ENCODE measurements at regions of chr6 and their contacts with region 1.

Region 1: GRCh38 chr6:133697666-133698065 is 191.2 kb upstream of the TCF21 start:
- DNase-seq: no peak
- H3K4me3 ChIP-seq: no peak overlapping the region
- H3K27ac ChIP-seq: no peak overlapping the region
- H3K4me1 ChIP-seq: no peaks in the 10 kb centered on the region
- H3K27me3 ChIP-seq: no peaks in the 10 kb centered on the region
- CTCF ChIP-seq: no peak
- POLR2A ChIP-seq: no peak

Region 2: GRCh38 chr6:133539502-133540259 is 158.0 kb before region 1 on chr6:
- intact Hi-C with region 1: no loop called
- DNase-seq: no peak
- H3K4me3 ChIP-seq: no peak overlapping the region
- H3K27ac ChIP-seq: no peak overlapping the region
- H3K4me1 ChIP-seq: no peaks in the 10 kb centered on the region
- H3K27me3 ChIP-seq: no peaks in the 10 kb centered on the region
- CTCF ChIP-seq: no peak
- POLR2A ChIP-seq: no peak

Region 3: GRCh38 chr6:133631421-133631820 is 66.2 kb before region 1 on chr6:
- intact Hi-C with region 1: loop called (anchors 2 kb)
- DNase-seq: no peak
- H3K4me3 ChIP-seq: no peak overlapping the region
- H3K27ac ChIP-seq: no peak overlapping the region
- H3K4me1 ChIP-seq: no peaks in the 10 kb centered on the region
- H3K27me3 ChIP-seq: no peaks in the 10 kb centered on the region
- CTCF ChIP-seq: no peak
- POLR2A ChIP-seq: no peak

Region 4: DNA sequence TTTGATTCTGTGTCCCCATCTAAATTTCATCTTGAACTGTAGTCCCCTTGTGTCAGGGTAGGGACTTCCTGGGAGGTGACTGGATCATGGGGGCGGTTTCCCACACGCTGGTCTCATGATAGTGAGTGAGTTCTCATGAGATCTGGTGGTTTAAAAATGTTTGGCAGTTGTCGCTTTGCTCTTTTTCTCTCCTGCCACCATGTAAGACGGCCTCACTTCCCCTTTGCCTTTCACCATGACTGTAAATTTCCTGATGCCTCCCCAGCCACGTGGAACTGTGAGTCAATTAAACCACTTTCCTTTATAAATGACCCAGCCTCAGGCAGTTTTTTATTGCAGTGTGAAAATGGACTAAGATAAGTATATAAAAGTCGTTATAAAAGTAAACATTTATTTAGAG is 700.8 kb after region 1 on chr6:
- intact Hi-C with region 1: no loop called
- DNase-seq: no peak
- H3K4me3 ChIP-seq: no peak overlapping the region
- H3K27ac ChIP-seq: no peak overlapping the region
- H3K4me1 ChIP-seq: no peaks in the 10 kb centered on the region
- H3K27me3 ChIP-seq: no peaks in the 10 kb centered on the region
- CTCF ChIP-seq: no peak
- POLR2A ChIP-seq: no peak